ENCODE measurements at regions of chr4 and their contacts with region 1.

Region 1: GRCh38 chr4:74228691-74229640 is 71.0 kb downstream of the MTHFD2L start:
- DNase-seq: peak; percentile 86
- H3K4me3 Mint-ChIP-seq: no peak overlapping the region
- H3K27ac Mint-ChIP-seq: no peak overlapping the region
- H3K4me1 Mint-ChIP-seq: peaks cover 28% of the 10 kb centered on the region
- H3K27me3 Mint-ChIP-seq: no peaks in the 10 kb centered on the region
- CTCF ChIP-seq: peak; percentile 81

Region 2: DNA sequence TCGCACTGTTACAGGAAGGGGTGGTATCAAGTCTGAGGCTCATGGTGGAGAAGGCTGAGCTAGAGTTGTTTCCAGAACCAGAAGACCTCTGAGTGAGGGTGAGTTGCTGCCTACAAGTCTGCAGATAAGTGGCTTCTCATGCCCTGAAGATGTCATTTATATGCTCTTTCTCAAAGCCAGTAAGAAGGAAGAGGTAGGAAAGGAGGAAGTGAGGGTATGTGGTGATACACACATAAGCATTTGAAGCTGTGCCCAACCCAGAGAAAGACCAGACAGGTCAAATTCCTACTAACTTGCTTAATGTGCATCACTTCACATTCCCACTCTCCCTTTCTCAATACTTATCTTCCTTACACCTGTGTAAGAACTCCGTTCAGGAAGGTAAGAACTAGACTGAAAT is 240.9 kb before region 1 on chr4 and contains the start of gene PPBP:
- CTCF ChIA-PET with region 1: no interaction called
- POLR2A ChIA-PET with region 1: no interaction called
- intact Hi-C with region 1: no loop called
- DNase-seq: no peak
- H3K4me3 Mint-ChIP-seq: no peak within 1 kb of the TSS
- H3K27ac Mint-ChIP-seq: no peak within 1 kb of the TSS
- H3K4me1 Mint-ChIP-seq: no peaks in the 10 kb centered on the region
- H3K27me3 Mint-ChIP-seq: no peaks in the 10 kb centered on the region
- CTCF ChIP-seq: no peak
- total RNA-seq, gene PPBP: not detected in 2 replicates

Region 3: GRCh38 chr4:74255096-74255495 is 26.1 kb after region 1 on chr4:
- CTCF ChIA-PET with region 1: interaction called, 10 read pairs
- POLR2A ChIA-PET with region 1: interaction called, 4 read pairs
- intact Hi-C with region 1: no loop called
- DNase-seq: no peak
- H3K4me3 Mint-ChIP-seq: no peak overlapping the region
- H3K27ac Mint-ChIP-seq: no peak overlapping the region
- H3K4me1 Mint-ChIP-seq: peaks cover 10% of the 10 kb centered on the region
- H3K27me3 Mint-ChIP-seq: no peaks in the 10 kb centered on the region
- CTCF ChIP-seq: no peak

Region 4: GRCh38 chr4:74283614-74284013 is 54.6 kb after region 1 on chr4:
- CTCF ChIA-PET with region 1: interaction called, 5 read pairs
- POLR2A ChIA-PET with region 1: interaction called, 10 read pairs
- intact Hi-C with region 1: no loop called
- DNase-seq: peak; percentile 93
- H3K4me3 Mint-ChIP-seq: peak overlapping the region; percentile 58
- H3K27ac Mint-ChIP-seq: peak overlapping the region; percentile 81
- H3K4me1 Mint-ChIP-seq: peaks cover 21% of the 10 kb centered on the region
- H3K27me3 Mint-ChIP-seq: no peaks in the 10 kb centered on the region
- CTCF ChIP-seq: no peak

Region 5: GRCh38 chr4:74320559-74321118 is 91.7 kb after region 1 on chr4:
- CTCF ChIA-PET with region 1: interaction called, 29 read pairs
- POLR2A ChIA-PET with region 1: interaction called, 16 read pairs
- intact Hi-C with region 1: no loop called
- DNase-seq: peak; percentile 90
- H3K4me3 Mint-ChIP-seq: no peak overlapping the region
- H3K27ac Mint-ChIP-seq: no peak overlapping the region
- H3K4me1 Mint-ChIP-seq: peaks cover 36% of the 10 kb centered on the region
- H3K27me3 Mint-ChIP-seq: no peaks in the 10 kb centered on the region
- CTCF ChIP-seq: peak; percentile 67